Endothelial cell of umbilical vein (primary cell): ENCODE measurements at regions of chr17 and their contacts with region 1.

Region 1: DNA sequence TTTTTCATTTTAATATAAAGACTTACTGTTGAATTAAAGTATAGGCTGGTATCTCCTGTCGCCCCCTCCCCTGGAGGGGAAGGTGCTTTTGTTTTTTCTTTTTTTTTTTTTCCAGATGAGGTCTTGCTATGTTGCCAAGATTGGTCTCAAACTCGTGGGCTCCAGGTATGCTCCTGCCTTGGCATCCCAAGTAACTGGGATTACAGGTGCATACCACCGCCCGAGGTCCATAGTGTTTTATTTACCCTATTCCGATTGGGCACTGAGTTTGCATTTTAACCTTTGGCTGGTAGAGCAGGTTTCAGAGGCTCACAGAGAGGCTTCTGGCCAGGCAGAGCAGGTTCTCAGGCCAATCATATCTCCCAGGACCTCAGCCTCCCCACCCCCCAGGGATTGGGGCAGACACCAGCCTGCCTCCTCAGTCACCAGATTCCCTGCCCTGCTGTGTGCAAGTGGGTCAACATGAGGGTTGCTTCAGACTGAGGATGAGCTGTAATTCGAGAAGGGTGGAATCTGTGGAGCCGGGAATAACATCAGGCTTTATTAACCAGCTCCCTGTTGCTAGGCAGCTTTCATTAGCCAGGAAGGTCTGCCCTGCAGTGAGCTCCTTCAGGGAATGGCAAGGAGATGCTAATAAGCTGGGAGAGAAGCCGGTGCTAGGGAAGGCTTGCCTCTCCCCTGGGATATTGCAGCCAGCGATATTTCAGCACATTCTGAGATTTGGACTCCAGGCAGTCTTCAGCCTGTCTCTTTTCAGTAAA is 10.4 kb downstream of the SGSM2 start:
- DNase-seq: no peak
- H3K4me3 ChIP-seq: no peak overlapping the region
- H3K27ac ChIP-seq: no peak overlapping the region
- H3K4me1 ChIP-seq: no peaks in the 10 kb centered on the region
- H3K27me3 ChIP-seq: no peaks in the 10 kb centered on the region
- CTCF ChIP-seq: no peak
- POLR2A ChIP-seq: no peak

Region 2: GRCh38 chr17:2303204-2304188 is 44.2 kb before region 1 on chr17 and contains the starts of genes SMG6 and SRR:
- CTCF ChIA-PET with region 1: interaction called, 5 read pairs
- POLR2A ChIA-PET with region 1: no interaction called
- dilution Hi-C with region 1: no loop called
- intact Hi-C with region 1: loop called (anchors 2 kb)
- DNase-seq: peak; percentile 88
- H3K4me3 ChIP-seq: peak within 1 kb of the TSS; percentile 70 to 99 (median 98)
- H3K27ac ChIP-seq: peak within 1 kb of the TSS; percentile 69
- H3K4me1 ChIP-seq: peaks cover 7% of the 10 kb centered on the region
- H3K27me3 ChIP-seq: no peaks in the 10 kb centered on the region
- CTCF ChIP-seq: no peak
- POLR2A ChIP-seq: peak; percentile 83
- total RNA-seq, gene SMG6: 42.2 and 43.0 TPM in 2 replicates
- total RNA-seq, gene SRR: 19.4 and 20.1 TPM in 2 replicates

Region 3: DNA sequence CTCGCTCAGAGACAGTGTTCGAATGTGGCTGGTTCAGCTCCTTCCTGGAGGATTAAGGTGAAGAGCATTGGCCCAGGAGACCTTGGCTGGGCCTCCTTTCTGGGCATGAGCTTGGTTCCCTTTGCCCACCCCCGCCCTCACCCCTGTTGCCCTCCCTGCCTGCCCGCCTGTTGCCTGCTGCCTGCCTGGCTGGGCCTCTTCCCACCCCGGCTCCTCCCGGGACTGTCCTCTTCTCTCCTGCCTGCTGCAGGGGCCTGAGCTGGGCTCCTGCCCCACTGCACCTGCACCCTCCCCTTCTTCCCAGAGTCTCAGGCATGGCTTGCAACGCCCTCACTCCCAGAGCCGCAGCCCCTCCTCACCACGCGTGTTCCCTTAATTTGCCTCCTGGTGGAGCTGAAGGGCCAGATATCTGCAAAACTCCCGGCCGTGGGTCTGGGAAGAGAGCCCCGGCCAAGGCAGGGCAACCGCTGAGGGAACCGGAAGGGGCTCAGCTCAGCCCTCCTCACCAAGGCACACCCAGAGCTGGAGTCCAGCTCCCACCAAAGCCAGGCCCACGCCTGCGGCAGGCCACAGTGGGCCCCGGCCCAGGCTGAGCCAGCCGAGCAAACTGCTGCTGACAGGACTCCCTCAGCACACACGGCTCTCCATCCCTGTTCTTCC is 22.0 kb after region 1 on chr17:
- CTCF ChIA-PET with region 1: interaction called, 10 read pairs
- POLR2A ChIA-PET with region 1: no interaction called
- dilution Hi-C with region 1: no loop called
- intact Hi-C with region 1: no loop called
- DNase-seq: no peak
- H3K4me3 ChIP-seq: no peak overlapping the region
- H3K27ac ChIP-seq: no peak overlapping the region
- H3K4me1 ChIP-seq: peaks cover 6% of the 10 kb centered on the region
- H3K27me3 ChIP-seq: no peaks in the 10 kb centered on the region
- CTCF ChIP-seq: peak in 1 of 2 donors; percentile 2
- POLR2A ChIP-seq: no peak